Naive thymus-derived CD4-positive, alpha-beta T cell (primary cell): ENCODE measurements at regions of chr3 and their contacts with region 1.

Region 1: GRCh38 chr3:31275038-31275562 is 257.6 kb upstream of the STT3B start:
- DNase-seq: no peak
- ATAC-seq: no peak
- H3K4me3 ChIP-seq: no peak overlapping the region
- H3K4me3 Mint-ChIP-seq: no peak overlapping the region
- H3K27ac ChIP-seq: no peak overlapping the region
- H3K27ac Mint-ChIP-seq: no peak overlapping the region
- H3K4me1 ChIP-seq: peaks cover 0 to 4% of the 10 kb centered on the region in 2 donors
- H3K4me1 Mint-ChIP-seq: peaks cover 10 to 29% (median 15%) of the 10 kb centered on the region in 7 donors
- H3K27me3 ChIP-seq: no peaks in the 10 kb centered on the region
- H3K27me3 Mint-ChIP-seq: peaks cover 0 to 10% (median 0%) of the 10 kb centered on the region in 5 donors

Region 2: GRCh38 chr3:30548600-30548999 is 726.5 kb before region 1 on chr3:
- CTCF ChIA-PET with region 1: no interaction called
- POLR2A ChIA-PET with region 1: no interaction called
- intact Hi-C with region 1: no loop called
- DNase-seq: peak in 2 of 9 donors; percentile 8 to 23
- ATAC-seq: no peak
- H3K4me3 ChIP-seq: no peak overlapping the region
- H3K4me3 Mint-ChIP-seq: no peak overlapping the region
- H3K27ac ChIP-seq: no peak overlapping the region
- H3K27ac Mint-ChIP-seq: no peak overlapping the region
- H3K4me1 ChIP-seq: no peaks in the 10 kb centered on the region
- H3K4me1 Mint-ChIP-seq: peaks cover 0 to 17% (median 7%) of the 10 kb centered on the region in 7 donors
- H3K27me3 ChIP-seq: no peaks in the 10 kb centered on the region
- H3K27me3 Mint-ChIP-seq: no peaks in the 10 kb centered on the region

Region 3: GRCh38 chr3:30924763-30925162 is 350.3 kb before region 1 on chr3:
- CTCF ChIA-PET with region 1: no interaction called
- POLR2A ChIA-PET with region 1: no interaction called
- intact Hi-C with region 1: no loop called
- DNase-seq: no peak
- ATAC-seq: no peak
- H3K4me3 ChIP-seq: no peak overlapping the region
- H3K4me3 Mint-ChIP-seq: no peak overlapping the region
- H3K27ac ChIP-seq: no peak overlapping the region
- H3K27ac Mint-ChIP-seq: no peak overlapping the region
- H3K4me1 ChIP-seq: no peaks in the 10 kb centered on the region
- H3K4me1 Mint-ChIP-seq: peaks cover 0 to 2% (median 0%) of the 10 kb centered on the region in 7 donors
- H3K27me3 ChIP-seq: no peaks in the 10 kb centered on the region
- H3K27me3 Mint-ChIP-seq: peaks cover 0 to 18% (median 0%) of the 10 kb centered on the region in 5 donors

Region 4: DNA sequence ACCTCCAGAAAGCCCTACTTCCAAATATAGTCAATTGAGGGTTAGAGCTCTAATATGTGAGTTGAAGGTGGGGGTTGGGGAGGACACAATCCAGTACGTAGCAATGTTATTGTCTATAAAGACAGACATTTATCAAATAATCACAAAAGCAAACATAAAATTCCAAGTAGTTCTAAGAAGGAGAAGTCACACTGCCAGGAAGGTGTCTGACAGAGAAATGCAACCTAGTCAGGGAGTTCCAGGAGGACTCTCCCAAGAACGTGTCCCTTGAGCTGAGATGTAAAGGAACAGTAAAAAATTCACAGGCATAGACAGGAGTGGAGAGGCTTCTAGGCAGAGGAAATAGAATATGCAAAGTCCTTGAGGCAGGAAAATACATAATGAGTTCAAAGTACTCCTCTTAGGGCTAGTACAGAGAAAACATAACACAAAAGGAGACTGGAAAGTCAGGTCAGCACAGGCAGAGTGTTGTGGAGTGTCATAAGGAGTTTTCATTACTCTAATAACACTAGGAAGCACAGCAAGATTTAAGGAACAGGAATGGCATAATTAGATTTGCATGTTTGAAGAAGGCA is 20.0 kb before region 1 on chr3:
- CTCF ChIA-PET with region 1: no interaction called
- POLR2A ChIA-PET with region 1: no interaction called
- intact Hi-C with region 1: no loop called
- DNase-seq: no peak
- ATAC-seq: no peak
- H3K4me3 ChIP-seq: no peak overlapping the region
- H3K4me3 Mint-ChIP-seq: no peak overlapping the region
- H3K27ac ChIP-seq: no peak overlapping the region
- H3K27ac Mint-ChIP-seq: peak overlapping the region in 1 of 9 donors; percentile 28
- H3K4me1 ChIP-seq: peaks cover 0 to 5% of the 10 kb centered on the region in 2 donors
- H3K4me1 Mint-ChIP-seq: peaks cover 8 to 45% (median 19%) of the 10 kb centered on the region in 7 donors
- H3K27me3 ChIP-seq: no peaks in the 10 kb centered on the region
- H3K27me3 Mint-ChIP-seq: no peaks in the 10 kb centered on the region

Region 5: DNA sequence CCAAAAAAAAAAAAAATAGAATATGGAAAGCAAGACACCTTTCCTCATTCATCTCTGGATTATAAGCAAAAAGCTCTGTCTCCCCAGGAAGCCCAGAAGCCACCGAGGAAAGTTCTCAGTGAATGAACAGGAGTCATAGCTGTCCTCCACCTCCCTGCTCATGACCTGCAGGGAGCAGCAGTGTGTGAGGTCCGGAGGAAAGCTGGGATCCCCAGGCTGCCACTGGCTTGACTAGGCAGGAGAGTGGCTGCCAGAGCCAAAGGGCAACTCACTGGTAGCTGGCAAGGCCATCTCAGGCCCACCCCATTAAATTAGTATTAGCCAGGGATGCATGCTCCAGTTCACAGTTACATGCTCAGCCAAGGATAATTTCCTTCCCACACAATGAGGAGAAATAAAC is 66.0 kb after region 1 on chr3:
- CTCF ChIA-PET with region 1: no interaction called
- POLR2A ChIA-PET with region 1: no interaction called
- intact Hi-C with region 1: loop called in 1 of 2 experiments (anchors 5 kb)
- DNase-seq: no peak
- ATAC-seq: no peak
- H3K4me3 ChIP-seq: no peak overlapping the region
- H3K4me3 Mint-ChIP-seq: no peak overlapping the region
- H3K27ac ChIP-seq: no peak overlapping the region
- H3K27ac Mint-ChIP-seq: no peak overlapping the region
- H3K4me1 ChIP-seq: no peaks in the 10 kb centered on the region
- H3K4me1 Mint-ChIP-seq: peaks cover 0 to 4% (median 0%) of the 10 kb centered on the region in 7 donors
- H3K27me3 ChIP-seq: no peaks in the 10 kb centered on the region
- H3K27me3 Mint-ChIP-seq: no peaks in the 10 kb centered on the region

Region 6: GRCh38 chr3:31544634-31545033 is 269.5 kb after region 1 on chr3:
- CTCF ChIA-PET with region 1: no interaction called
- POLR2A ChIA-PET with region 1: no interaction called
- intact Hi-C with region 1: no loop called
- DNase-seq: no peak
- ATAC-seq: peak; percentile 33
- H3K4me3 ChIP-seq: no peak overlapping the region
- H3K4me3 Mint-ChIP-seq: peak overlapping the region in 9 of 10 donors; percentile 29 to 75 (median 70)
- H3K27ac ChIP-seq: peak overlapping the region; percentile 12
- H3K27ac Mint-ChIP-seq: peak overlapping the region in 8 of 9 donors; percentile 7 to 76 (median 44)
- H3K4me1 ChIP-seq: peaks cover 21 to 32% of the 10 kb centered on the region in 2 donors
- H3K4me1 Mint-ChIP-seq: peaks cover 55 to 99% (median 90%) of the 10 kb centered on the region in 7 donors
- H3K27me3 ChIP-seq: no peaks in the 10 kb centered on the region
- H3K27me3 Mint-ChIP-seq: no peaks in the 10 kb centered on the region